Activated T-helper 1 cell treated with anti-CD3 and anti-CD28 coated beads, Interleukin-12 subunit alpha, Interleukin-12 subunit beta, Interleukin-2, Interleukin-4 antibody, amounts not matched to agents 30 ng/mL and 10 ng/mL and 1 ng/mL, durations not matched to agents 14 hours and 24 hours and 36 hours (primary cell): ENCODE measurements at regions of chr12 and their contacts with region 1.

Region 1: GRCh38 chr12:120437754-120438494 is at the start of gene COX6A1:
- DNase-seq: peak; percentile 97
- H3K4me3 Mint-ChIP-seq: peak within 1 kb of the TSS; percentile 100
- H3K27ac Mint-ChIP-seq: peak within 1 kb of the TSS; percentile 98
- H3K4me1 Mint-ChIP-seq: peaks cover 31% of the 10 kb centered on the region
- H3K27me3 Mint-ChIP-seq: no peaks in the 10 kb centered on the region
- total RNA-seq, gene COX6A1: 352 and 365 TPM in 2 replicates

Region 2: DNA sequence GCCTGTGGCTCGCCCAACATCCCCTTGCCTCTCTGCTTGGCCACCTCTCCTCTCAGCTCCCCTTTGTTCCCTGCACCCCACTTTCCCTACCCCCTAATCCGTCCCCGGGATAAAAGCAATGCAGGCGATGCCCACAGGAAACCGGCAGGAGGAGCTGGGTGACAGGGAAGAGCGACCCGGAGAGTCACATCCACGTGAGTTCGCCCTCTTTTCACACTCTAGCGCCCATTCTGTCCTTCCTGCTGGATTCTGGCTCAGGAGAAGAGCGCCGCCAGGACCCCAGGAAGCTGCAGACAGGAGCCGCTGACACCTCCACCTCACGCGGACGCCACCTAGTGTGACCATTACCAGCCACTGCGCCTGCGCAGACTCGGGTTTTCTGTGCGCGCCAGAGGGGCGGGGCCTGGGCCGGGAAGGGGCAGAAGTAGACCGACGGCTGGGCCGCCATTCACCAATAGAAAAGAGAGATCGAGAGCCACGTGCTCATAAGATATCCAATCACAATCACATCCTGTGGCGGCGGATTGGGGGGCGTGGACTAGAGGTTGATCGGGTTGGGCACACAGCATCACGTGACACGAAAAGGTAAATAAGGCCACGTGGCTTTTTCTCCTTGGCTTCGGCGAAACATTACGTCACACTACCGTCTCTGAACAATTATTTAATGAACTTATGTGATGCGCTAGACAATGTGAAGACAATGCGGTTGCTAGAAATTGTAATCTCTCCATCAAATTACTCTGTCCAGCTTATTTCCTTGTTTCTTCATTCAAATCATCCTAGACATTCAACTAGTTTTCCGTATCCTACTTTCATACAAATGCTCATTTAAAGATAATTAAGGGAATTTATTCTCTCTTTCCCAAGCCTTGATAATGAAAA is 120.5 kb before region 1 on chr12:
- intact Hi-C with region 1: loop called (anchors 1 kb)
- DNase-seq: peak; percentile 100
- H3K4me3 Mint-ChIP-seq: peak overlapping the region; percentile 89
- H3K27ac Mint-ChIP-seq: peak overlapping the region; percentile 92
- H3K4me1 Mint-ChIP-seq: peaks cover 16% of the 10 kb centered on the region
- H3K27me3 Mint-ChIP-seq: peaks cover 6% of the 10 kb centered on the region

Region 3: DNA sequence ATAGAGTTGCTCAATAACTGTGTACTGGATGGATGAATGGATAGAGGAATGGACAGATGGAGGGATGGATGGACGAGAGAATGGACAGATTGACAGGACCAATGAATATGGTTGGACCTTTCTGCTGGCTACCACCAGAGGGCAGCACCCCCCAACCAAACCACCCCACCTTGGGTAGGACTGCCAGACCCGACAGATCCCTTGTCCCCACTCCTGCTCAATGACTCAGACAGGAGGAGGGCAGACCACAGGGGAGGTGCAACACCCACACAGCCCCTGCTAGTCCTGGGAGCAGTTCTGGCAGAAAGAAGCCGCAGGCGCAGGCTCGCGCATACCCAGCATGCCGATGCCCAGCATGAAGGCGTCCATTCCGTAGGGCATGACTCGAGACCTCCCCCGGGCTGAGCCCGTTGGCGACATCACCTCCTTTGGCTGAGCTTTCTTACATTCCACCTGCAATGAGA is 81.3 kb before region 1 on chr12:
- intact Hi-C with region 1: loop called (anchors 2 kb)
- DNase-seq: peak; percentile 49
- H3K4me3 Mint-ChIP-seq: no peak overlapping the region
- H3K27ac Mint-ChIP-seq: no peak overlapping the region
- H3K4me1 Mint-ChIP-seq: no peaks in the 10 kb centered on the region
- H3K27me3 Mint-ChIP-seq: peaks cover 27% of the 10 kb centered on the region

Region 4: GRCh38 chr12:120469450-120470149 is 31.7 kb after region 1 on chr12 and contains the start of gene SRSF9:
- intact Hi-C with region 1: loop called (anchors 1 kb)
- DNase-seq: peak; percentile 97
- H3K4me3 Mint-ChIP-seq: peak within 1 kb of the TSS; percentile 95
- H3K27ac Mint-ChIP-seq: peak within 1 kb of the TSS; percentile 87
- H3K4me1 Mint-ChIP-seq: peaks cover 52% of the 10 kb centered on the region
- H3K27me3 Mint-ChIP-seq: peaks cover 2% of the 10 kb centered on the region
- total RNA-seq, gene SRSF9: 233 and 239 TPM in 2 replicates

Region 5: GRCh38 chr12:120534203-120534702 is 96.3 kb after region 1 on chr12 and contains the start of gene RNF10:
- intact Hi-C with region 1: loop called (anchors 1 kb)
- DNase-seq: peak; percentile 79
- H3K4me3 Mint-ChIP-seq: peak within 1 kb of the TSS; percentile 96
- H3K27ac Mint-ChIP-seq: peak within 1 kb of the TSS; percentile 94
- H3K4me1 Mint-ChIP-seq: peaks cover 53% of the 10 kb centered on the region
- H3K27me3 Mint-ChIP-seq: no peaks in the 10 kb centered on the region
- total RNA-seq, gene RNF10: 170 and 181 TPM in 2 replicates

Region 6: GRCh38 chr12:120649442-120650232 is 211.7 kb after region 1 on chr12:
- intact Hi-C with region 1: loop called (anchors 2 kb)
- DNase-seq: no peak
- H3K4me3 Mint-ChIP-seq: no peak overlapping the region
- H3K27ac Mint-ChIP-seq: no peak overlapping the region
- H3K4me1 Mint-ChIP-seq: peaks cover 15% of the 10 kb centered on the region
- H3K27me3 Mint-ChIP-seq: peaks cover 54% of the 10 kb centered on the region

Region 7: DNA sequence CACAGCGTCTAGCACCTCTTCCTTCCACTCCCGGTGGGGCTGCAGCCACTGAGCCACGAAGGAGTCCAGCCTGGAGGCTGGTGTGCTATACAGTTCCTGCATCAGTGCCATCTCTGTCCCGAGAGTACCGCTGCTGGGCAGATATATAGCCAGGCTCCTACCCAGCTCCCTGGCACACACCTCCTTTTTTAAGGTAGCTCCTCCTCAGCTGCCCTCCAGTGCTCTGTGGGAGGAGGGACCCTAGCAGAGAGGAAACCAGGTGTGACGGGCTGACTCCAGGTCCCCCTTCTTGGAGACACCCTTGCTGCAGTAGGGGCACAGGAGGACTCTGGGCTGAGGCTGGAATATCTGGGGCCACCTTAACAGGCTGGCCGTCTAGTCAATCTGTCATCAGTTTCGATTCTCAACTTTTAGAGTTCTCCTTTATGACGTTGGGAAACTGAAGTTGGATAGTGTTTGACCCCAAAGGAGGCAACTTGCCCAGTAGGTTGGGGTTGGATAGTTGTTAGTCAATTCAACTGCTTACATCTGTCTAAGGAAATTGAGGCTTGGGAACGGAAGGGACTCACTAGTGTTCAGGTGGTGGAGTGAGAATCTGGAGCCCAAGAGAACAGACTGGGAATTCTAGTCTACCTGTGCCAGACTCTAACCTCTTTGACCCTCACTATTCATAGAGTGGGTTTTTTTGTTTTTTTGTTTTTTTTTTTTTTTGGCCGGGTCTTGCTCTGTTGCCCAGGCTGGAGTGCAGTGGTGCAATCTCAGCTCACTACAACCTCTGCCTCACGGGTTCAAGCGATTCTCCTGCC is 601.1 kb after region 1 on chr12 and contains the start of gene OASL:
- intact Hi-C with region 1: loop called (anchors 10 kb)
- DNase-seq: peak; percentile 54
- H3K4me3 Mint-ChIP-seq: peak within 1 kb of the TSS; percentile 91
- H3K27ac Mint-ChIP-seq: peak within 1 kb of the TSS; percentile 84
- H3K4me1 Mint-ChIP-seq: peaks cover 51% of the 10 kb centered on the region
- H3K27me3 Mint-ChIP-seq: peaks cover 12% of the 10 kb centered on the region
- total RNA-seq, gene OASL: 2.4 and 3.1 TPM in 2 replicates